CD4-positive, alpha-beta memory T cell (primary cell): ENCODE measurements at regions of chr4 and their contacts with region 1.

Region 1: GRCh38 chr4:169612871-169613859 is 782 bp upstream of the NEK1 start:
- DNase-seq: peak; percentile 66 to 76 (median 74)
- H3K4me3 ChIP-seq: peak overlapping the region; percentile 37 to 68
- H3K4me3 Mint-ChIP-seq: peak overlapping the region; percentile 94 to 98 (median 96)
- H3K27ac ChIP-seq: peak overlapping the region; percentile 98
- H3K27ac Mint-ChIP-seq: peak overlapping the region; percentile 99 to 100 (median 99)
- H3K4me1 ChIP-seq: peaks cover 30% of the 10 kb centered on the region
- H3K4me1 Mint-ChIP-seq: peaks cover 23 to 45% (median 31%) of the 10 kb centered on the region in 4 donors
- H3K27me3 ChIP-seq: no peaks in the 10 kb centered on the region
- H3K27me3 Mint-ChIP-seq: no peaks in the 10 kb centered on the region

Region 2: DNA sequence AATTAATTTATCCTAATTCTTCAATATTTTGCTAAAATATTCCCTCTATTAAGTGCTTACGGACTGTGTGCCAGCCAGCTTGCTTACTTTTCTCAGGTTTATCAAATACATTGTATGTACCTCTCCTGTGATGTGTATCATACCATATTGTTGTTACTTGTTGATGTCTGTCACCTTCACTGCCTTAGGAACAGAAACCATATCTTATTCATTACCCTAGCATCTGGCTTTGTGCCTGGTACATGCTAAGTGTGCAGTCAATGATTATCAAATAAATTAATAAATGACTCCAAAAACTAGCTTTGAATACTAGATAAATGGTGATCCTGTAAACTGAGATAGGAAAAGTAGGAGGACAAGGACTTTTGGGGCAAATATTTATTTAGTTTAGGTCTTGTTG is 14.1 kb after region 1 on chr4:
- CTCF ChIA-PET with region 1: interaction called, 13 read pairs
- POLR2A ChIA-PET with region 1: interaction called, 29 read pairs
- intact Hi-C with region 1: no loop called
- DNase-seq: no peak
- H3K4me3 ChIP-seq: no peak overlapping the region
- H3K4me3 Mint-ChIP-seq: no peak overlapping the region
- H3K27ac ChIP-seq: no peak overlapping the region
- H3K27ac Mint-ChIP-seq: peak overlapping the region in 5 of 7 donors; percentile 13 to 58 (median 39)
- H3K4me1 ChIP-seq: peaks cover 11% of the 10 kb centered on the region
- H3K4me1 Mint-ChIP-seq: peaks cover 38 to 70% (median 58%) of the 10 kb centered on the region in 4 donors
- H3K27me3 ChIP-seq: no peaks in the 10 kb centered on the region
- H3K27me3 Mint-ChIP-seq: no peaks in the 10 kb centered on the region

Region 3: DNA sequence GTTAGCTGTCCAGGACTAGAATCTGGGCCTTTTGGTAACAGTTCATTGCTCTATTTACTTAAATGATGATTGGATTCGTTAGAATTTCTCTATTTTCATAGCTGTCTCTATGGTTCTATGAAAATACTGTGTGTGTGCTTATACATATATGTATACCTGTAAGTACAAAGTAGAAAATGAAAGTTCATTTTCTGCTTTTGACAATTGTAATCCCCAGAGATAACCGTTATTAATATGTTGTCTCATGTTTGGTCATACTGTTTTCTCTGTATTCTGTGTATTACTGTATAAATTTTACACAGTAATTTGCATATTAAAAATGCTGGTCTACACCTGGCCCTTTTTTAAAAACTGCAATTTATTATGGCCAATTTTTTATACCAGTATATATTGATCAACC is 62.7 kb after region 1 on chr4:
- CTCF ChIA-PET with region 1: no interaction called
- POLR2A ChIA-PET with region 1: no interaction called
- intact Hi-C with region 1: no loop called
- DNase-seq: no peak
- H3K4me3 ChIP-seq: no peak overlapping the region
- H3K4me3 Mint-ChIP-seq: no peak overlapping the region
- H3K27ac ChIP-seq: no peak overlapping the region
- H3K27ac Mint-ChIP-seq: peak overlapping the region in 2 of 7 donors; percentile 24 to 64
- H3K4me1 ChIP-seq: no peaks in the 10 kb centered on the region
- H3K4me1 Mint-ChIP-seq: peaks cover 0 to 12% (median 4%) of the 10 kb centered on the region in 4 donors
- H3K27me3 ChIP-seq: no peaks in the 10 kb centered on the region
- H3K27me3 Mint-ChIP-seq: no peaks in the 10 kb centered on the region

Region 4: GRCh38 chr4:169715826-169716225 is 102.7 kb after region 1 on chr4:
- CTCF ChIA-PET with region 1: interaction called, 3 read pairs
- POLR2A ChIA-PET with region 1: no interaction called
- intact Hi-C with region 1: loop called (anchors 2 kb)
- DNase-seq: no peak
- H3K4me3 ChIP-seq: no peak overlapping the region
- H3K4me3 Mint-ChIP-seq: no peak overlapping the region
- H3K27ac ChIP-seq: no peak overlapping the region
- H3K27ac Mint-ChIP-seq: no peak overlapping the region
- H3K4me1 ChIP-seq: no peaks in the 10 kb centered on the region
- H3K4me1 Mint-ChIP-seq: peaks cover 4 to 10% (median 7%) of the 10 kb centered on the region in 4 donors
- H3K27me3 ChIP-seq: no peaks in the 10 kb centered on the region
- H3K27me3 Mint-ChIP-seq: no peaks in the 10 kb centered on the region

Region 5: GRCh38 chr4:169757575-169758184 is 144.5 kb after region 1 on chr4 and contains the start of gene HPF1:
- CTCF ChIA-PET with region 1: interaction called, 8 read pairs
- POLR2A ChIA-PET with region 1: interaction called, 8 read pairs
- intact Hi-C with region 1: loop called (anchors 1 kb)
- DNase-seq: peak; percentile 89 to 93 (median 90)
- H3K4me3 ChIP-seq: peak within 1 kb of the TSS; percentile 83 to 89
- H3K4me3 Mint-ChIP-seq: peak within 1 kb of the TSS; percentile 83 to 93 (median 88)
- H3K27ac ChIP-seq: peak within 1 kb of the TSS; percentile 54
- H3K27ac Mint-ChIP-seq: peak within 1 kb of the TSS; percentile 12 to 85 (median 53)
- H3K4me1 ChIP-seq: peaks cover 18% of the 10 kb centered on the region
- H3K4me1 Mint-ChIP-seq: peaks cover 23 to 33% (median 26%) of the 10 kb centered on the region in 4 donors
- H3K27me3 ChIP-seq: no peaks in the 10 kb centered on the region
- H3K27me3 Mint-ChIP-seq: no peaks in the 10 kb centered on the region
- total RNA-seq, gene HPF1: 14.4 to 15.0 TPM

Region 6: DNA sequence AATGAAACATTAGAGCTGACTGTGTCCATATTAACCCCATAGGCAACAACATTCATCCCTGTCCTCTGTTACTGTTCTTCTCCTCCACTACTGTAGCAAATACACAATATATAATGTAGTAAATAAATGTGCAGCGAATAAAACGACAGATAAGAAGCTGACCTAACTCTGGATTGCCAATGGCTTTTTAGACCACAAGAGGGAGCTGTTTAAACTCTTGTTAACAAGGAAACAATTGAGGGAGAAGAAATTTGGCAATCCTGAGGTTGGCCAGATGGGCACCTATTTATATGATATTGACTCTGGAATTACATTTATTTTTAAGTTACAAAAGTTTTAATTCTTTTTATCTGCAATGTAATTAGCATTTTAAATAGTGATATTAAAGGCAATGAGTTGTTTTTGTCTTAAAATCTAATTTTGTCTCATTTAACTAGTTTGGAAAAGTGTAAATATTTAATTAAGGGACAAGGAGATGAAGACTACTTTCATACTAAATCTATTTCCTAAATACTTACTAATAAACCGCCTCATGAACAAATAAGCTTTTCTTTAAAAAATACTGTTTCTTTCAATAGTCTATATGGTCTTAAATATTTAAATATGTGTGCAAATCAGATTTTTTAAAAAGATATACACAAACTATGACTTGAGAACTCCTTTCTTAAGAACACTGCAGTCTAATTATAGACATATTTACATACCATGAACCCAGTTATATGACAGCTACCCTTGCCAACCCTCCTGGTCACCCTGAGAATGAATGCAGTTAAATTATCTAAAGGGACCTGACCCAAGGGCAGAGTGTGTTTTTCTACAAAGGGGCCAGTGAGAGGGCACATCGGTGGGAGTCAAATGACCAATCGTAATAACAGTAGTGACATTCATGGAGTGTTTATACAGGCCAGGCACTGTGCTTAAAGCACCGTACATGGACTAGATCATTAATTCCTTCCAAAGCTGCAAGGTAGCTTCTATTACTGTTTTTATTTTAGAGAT is 197.5 kb after region 1 on chr4:
- CTCF ChIA-PET with region 1: interaction called, 34 read pairs
- POLR2A ChIA-PET with region 1: interaction called, 10 read pairs
- intact Hi-C with region 1: loop called (anchors 1 kb)
- DNase-seq: peak in 4 of 5 donors; percentile 46 to 56 (median 50)
- H3K4me3 ChIP-seq: no peak overlapping the region
- H3K4me3 Mint-ChIP-seq: no peak overlapping the region
- H3K27ac ChIP-seq: no peak overlapping the region
- H3K27ac Mint-ChIP-seq: no peak overlapping the region
- H3K4me1 ChIP-seq: no peaks in the 10 kb centered on the region
- H3K4me1 Mint-ChIP-seq: no peaks in the 10 kb centered on the region
- H3K27me3 ChIP-seq: no peaks in the 10 kb centered on the region
- H3K27me3 Mint-ChIP-seq: peaks cover 4 to 9% of the 10 kb centered on the region in 2 donors

Region 7: DNA sequence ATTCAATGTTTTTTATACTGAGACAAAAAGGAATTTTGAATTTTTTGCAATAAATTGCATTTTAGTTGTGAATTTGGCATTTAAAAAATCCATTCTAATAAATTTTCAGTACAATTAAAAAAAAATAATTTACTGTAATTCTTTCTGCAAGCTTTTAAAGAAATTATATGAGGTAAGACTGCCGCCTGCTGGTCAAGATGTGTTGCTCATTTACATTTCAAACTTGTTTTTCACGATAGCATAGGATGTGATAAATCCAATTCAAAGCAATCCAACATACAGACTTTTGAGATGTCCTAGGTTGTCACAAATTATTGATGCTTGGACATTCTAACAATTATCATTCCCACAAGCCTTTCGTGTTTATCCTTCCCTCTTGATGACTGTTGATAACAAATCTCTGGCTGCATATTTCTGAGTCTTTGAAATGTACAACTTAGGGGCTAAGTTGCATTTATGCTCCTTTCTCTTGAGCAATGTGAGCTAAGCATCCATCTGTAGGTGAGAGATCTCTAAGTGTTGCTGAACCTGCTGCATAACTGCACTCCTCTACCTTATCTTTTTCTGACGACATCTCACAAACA is 434.7 kb after region 1 on chr4:
- CTCF ChIA-PET with region 1: interaction called, 10 read pairs
- POLR2A ChIA-PET with region 1: no interaction called
- intact Hi-C with region 1: loop called (anchors 1 kb)
- DNase-seq: peak; percentile 54 to 61 (median 56)
- H3K4me3 ChIP-seq: no peak overlapping the region
- H3K4me3 Mint-ChIP-seq: no peak overlapping the region
- H3K27ac ChIP-seq: no peak overlapping the region
- H3K27ac Mint-ChIP-seq: no peak overlapping the region
- H3K4me1 ChIP-seq: no peaks in the 10 kb centered on the region
- H3K4me1 Mint-ChIP-seq: no peaks in the 10 kb centered on the region
- H3K27me3 ChIP-seq: no peaks in the 10 kb centered on the region
- H3K27me3 Mint-ChIP-seq: peaks cover 2% of the 10 kb centered on the region in 2 donors